Calu3 (cell line): ENCODE measurements at regions of chr7 and their contacts with region 1.

Region 1: GRCh38 chr7:3321206-3321605 is 20.2 kb downstream of the SDK1 start:
- DNase-seq: no peak
- H3K4me3 Mint-ChIP-seq: no peak overlapping the region
- H3K27ac Mint-ChIP-seq: no peak overlapping the region
- H3K4me1 Mint-ChIP-seq: peaks cover 9% of the 10 kb centered on the region
- H3K27me3 Mint-ChIP-seq: no peaks in the 10 kb centered on the region
- CTCF ChIP-seq: no peak

Region 2: DNA sequence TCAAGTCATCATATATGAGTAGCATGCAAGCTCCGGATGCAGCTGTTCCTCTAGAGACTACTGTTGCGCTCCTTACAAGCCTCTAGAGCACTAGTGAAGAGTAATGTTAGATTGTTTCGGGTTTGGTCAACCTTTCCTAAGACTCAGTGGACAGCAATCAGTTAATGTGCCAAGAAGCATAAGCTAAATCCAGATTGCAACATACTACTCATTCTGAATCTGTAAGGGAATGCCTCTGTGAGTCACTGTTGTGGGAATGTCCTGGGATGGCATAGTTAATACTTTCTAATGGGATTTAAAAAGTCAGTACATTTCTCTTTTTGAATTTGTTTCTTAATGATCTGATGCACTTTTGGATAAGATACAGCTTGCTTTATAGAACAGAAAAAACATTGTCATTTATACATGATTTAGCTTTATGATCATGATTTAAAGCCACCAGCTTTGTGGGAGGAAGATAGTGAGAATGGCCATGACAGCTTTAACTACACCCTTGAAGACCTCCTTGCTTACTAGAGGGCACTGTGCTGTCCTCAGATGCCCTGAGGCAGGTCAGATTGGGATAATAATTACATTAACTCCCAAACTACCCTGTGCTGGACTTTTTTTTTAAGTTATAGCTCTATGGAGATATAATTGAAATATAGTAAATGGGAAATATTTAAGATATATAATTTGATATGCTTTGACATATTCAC is 118.3 kb after region 1 on chr7:
- CTCF ChIA-PET with region 1: interaction called, 10 read pairs
- intact Hi-C with region 1: no loop called
- DNase-seq: peak; percentile 40
- H3K4me3 Mint-ChIP-seq: peak overlapping the region; percentile 25
- H3K27ac Mint-ChIP-seq: peak overlapping the region; percentile 54
- H3K4me1 Mint-ChIP-seq: peaks cover 53% of the 10 kb centered on the region
- H3K27me3 Mint-ChIP-seq: no peaks in the 10 kb centered on the region
- CTCF ChIP-seq: no peak